ENCODE measurements at regions of chr12 and their contacts with region 1.

Region 1: GRCh38 chr12:23659131-23659530 is 290.3 kb downstream of the SOX5 start:
- DNase-seq: no peak
- H3K4me3 ChIP-seq: no peak overlapping the region
- H3K27ac ChIP-seq: no peak overlapping the region
- H3K4me1 ChIP-seq: no peaks in the 10 kb centered on the region
- CTCF ChIP-seq: no peak

Region 2: DNA sequence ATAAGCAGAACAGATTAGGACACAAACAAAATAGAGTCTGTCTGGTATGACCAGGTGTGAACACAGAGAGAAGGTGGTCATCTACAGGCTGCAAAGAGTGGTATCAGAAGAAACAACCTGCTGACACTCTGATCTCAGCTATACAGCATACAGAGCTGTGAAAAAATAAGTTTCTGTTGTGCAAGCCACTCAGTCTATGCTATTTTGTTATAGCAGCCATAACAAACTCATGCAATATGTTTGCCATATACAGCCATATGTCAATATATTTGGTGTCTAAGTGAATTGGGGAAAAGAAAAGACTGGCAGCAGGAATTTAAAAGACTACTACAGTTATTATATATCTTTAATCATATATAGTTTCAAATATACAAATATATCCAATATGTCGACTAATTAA is 10.6 kb before region 1 on chr12:
- CTCF ChIA-PET with region 1: no interaction called
- POLR2A ChIA-PET with region 1: interaction called, 11 read pairs
- intact Hi-C with region 1: no loop called
- DNase-seq: no peak
- H3K4me3 ChIP-seq: no peak overlapping the region
- H3K27ac ChIP-seq: no peak overlapping the region
- H3K4me1 ChIP-seq: no peaks in the 10 kb centered on the region
- CTCF ChIP-seq: no peak

Measured in OCI-LY7 (cell line).